HepG2 (cell line): ENCODE measurements at regions of chr16 and their contacts with region 1.

Region 1: DNA sequence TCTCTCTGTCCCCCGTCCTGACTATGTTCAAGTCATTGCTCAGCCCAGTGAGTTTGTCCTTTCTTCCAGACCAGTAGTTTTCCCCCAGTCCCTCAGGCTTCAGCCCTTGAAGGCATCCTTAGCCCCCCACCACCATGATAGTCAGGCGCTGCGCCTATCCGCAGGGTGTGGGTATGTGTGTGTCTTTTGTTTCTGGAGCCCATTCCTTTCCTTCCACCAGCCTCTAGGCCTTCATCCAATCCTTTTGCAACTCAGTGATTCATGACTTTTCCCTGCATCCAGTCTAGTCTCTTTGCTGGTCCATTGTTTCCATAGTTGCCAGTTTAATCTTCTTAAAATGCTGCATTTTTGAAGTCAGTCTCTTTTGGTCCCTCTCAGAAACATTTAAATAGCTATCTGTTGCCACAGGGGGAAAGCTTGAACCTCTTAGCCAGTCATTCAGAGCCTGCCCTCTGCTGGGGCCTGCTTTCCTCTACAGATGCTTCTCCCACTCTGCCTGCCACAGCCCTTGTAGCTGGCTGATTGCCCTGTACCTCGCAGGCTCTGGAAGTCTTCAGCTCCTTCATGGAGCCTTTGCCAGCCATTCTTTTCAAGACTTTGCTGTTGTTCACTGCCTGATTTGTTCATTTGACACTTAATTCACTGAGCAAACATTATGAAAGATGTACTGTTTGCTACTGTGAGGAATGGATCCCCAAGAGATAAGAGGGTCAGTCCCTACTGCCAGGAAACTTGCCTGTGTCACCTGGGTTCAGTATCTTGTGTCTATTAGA is 55.9 kb upstream of the ADCY7 start:
- DNase-seq: peak; percentile 77
- ATAC-seq: peak; percentile 98
- H3K4me3 ChIP-seq: no peak overlapping the region
- H3K27ac ChIP-seq: no peak overlapping the region
- H3K4me1 ChIP-seq: peaks cover 40% of the 10 kb centered on the region
- H3K27me3 ChIP-seq: no peaks in the 10 kb centered on the region
- CTCF ChIP-seq: peak; percentile 94
- EP300 ChIP-seq: no peak
- POLR2A ChIP-seq: no peak
- RAD21 ChIP-seq: peak; percentile 92

Region 2: DNA sequence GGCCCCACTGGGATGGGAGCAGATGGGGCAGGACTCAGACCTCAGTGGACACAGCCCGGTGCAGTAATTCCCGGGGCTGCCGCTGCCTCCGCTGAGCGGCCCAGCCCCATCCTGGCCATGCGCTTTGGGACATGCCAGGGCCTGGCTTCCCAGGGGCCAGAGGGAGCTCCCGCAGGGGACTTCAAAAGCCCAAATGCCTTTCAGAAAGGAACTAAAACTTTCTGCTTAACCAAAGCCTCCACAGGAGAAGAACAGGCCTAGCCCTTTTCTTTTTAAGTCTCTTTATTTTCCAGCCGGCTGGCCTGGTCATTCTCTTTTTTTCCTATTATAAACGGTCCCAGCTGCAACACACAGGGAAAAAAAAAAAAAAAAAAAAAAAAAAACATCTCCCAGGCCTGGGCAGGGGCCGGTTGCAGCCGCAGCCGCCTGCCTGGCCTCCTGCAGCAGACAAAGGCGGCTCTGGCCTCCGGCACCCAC is 343.8 kb before region 1 on chr16:
- CTCF ChIA-PET with region 1: no interaction called
- POLR2A ChIA-PET with region 1: no interaction called
- in situ Hi-C with region 1: no loop called
- intact Hi-C with region 1: no loop called
- DNase-seq: no peak
- ATAC-seq: peak; percentile 64
- H3K4me3 ChIP-seq: no peak overlapping the region
- H3K27ac ChIP-seq: no peak overlapping the region
- H3K4me1 ChIP-seq: no peaks in the 10 kb centered on the region
- H3K27me3 ChIP-seq: peaks cover 12 to 52% of the 10 kb centered on the region in 2 experiments
- CTCF ChIP-seq: no peak
- EP300 ChIP-seq: no peak
- POLR2A ChIP-seq: no peak
- RAD21 ChIP-seq: no peak

Region 3: DNA sequence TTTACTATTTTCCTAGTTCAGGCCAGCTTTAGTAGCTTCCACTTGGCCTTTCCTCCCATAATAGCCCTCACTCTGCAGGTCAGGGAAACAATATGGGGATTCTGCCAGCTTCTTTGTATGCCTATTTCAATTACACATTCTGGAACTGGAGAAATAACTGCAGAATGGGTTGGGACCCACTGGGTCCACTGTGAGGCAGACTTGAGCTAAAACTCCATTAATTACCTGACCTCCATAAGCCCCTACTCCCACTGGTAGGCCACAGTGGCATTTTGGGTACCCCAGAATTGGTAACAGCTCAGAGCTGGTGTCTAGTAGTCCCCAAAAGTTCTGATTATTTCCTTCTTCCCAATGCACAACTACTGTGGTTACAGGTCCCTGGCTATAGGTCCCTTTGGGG is 74.1 kb before region 1 on chr16:
- CTCF ChIA-PET with region 1: interaction called, 12 read pairs
- POLR2A ChIA-PET with region 1: no interaction called
- in situ Hi-C with region 1: no loop called
- intact Hi-C with region 1: loop called (anchors 5 kb)
- DNase-seq: no peak
- ATAC-seq: peak; percentile 41; the same call in 2 of the 3 replicates
- H3K4me3 ChIP-seq: no peak overlapping the region
- H3K27ac ChIP-seq: no peak overlapping the region
- H3K4me1 ChIP-seq: peaks cover 4% of the 10 kb centered on the region; the same call in 1 of the 2 replicates
- H3K27me3 ChIP-seq: peaks cover 1 to 10% of the 10 kb centered on the region in 2 experiments; a peak in 3 of 5 replicates
- CTCF ChIP-seq: peak; percentile 36
- EP300 ChIP-seq: no peak
- POLR2A ChIP-seq: no peak
- RAD21 ChIP-seq: no peak

Region 4: DNA sequence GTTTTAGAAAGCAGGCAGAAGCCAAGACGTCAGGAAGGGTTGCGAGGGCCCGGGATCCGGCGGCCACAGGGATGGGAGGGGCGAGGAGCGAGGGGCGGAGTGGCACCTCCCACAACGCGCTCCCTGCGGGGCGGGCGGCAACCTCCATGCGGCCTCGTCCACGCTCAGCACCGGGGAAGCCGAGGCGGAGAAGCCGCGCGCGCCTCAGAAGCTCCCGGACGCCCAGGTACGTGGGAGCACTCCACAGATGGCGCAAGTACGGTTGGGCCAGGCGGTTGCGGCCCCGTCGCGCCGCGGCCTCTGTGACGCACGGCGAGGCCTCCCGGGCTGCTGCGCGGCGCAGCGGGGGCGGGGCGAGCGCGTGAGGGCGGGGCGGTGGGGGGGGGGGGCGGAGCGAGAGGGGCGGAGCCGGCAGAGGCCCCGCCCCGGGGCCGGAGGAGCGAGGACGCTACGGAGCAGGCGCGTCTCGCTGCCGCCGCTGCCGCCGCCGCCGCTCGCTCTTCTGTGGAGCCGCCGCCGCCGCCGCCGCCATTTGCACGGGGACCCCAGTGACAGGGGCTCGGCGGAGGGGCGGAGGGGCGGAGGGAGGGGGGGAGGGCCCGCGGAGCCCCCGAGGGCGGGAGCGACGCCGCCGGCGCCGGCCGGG is 57.5 kb before region 1 on chr16 and contains the start of gene TENT4B:
- CTCF ChIA-PET with region 1: no interaction called
- POLR2A ChIA-PET with region 1: interaction called, 6 read pairs
- in situ Hi-C with region 1: loop called (anchors 10 kb)
- intact Hi-C with region 1: loop called (anchors 1 kb)
- DNase-seq: peak; percentile 62
- ATAC-seq: peak; percentile 68
- H3K4me3 ChIP-seq: peak within 1 kb of the TSS; percentile 98 to 100 (median 98)
- H3K27ac ChIP-seq: peak within 1 kb of the TSS; percentile 96
- H3K4me1 ChIP-seq: peaks cover 44% of the 10 kb centered on the region
- H3K27me3 ChIP-seq: no peaks in the 10 kb centered on the region; a peak in 1 of 5 replicates
- CTCF ChIP-seq: 0 out of 2 replicates have a peak, but pooled peaks have one; percentile 34
- EP300 ChIP-seq: no peak
- POLR2A ChIP-seq: peak; percentile 90 to 91
- RAD21 ChIP-seq: peak; percentile 57
- total RNA-seq, gene TENT4B: 32.8 and 36.0 TPM in 2 replicates

Region 5: DNA sequence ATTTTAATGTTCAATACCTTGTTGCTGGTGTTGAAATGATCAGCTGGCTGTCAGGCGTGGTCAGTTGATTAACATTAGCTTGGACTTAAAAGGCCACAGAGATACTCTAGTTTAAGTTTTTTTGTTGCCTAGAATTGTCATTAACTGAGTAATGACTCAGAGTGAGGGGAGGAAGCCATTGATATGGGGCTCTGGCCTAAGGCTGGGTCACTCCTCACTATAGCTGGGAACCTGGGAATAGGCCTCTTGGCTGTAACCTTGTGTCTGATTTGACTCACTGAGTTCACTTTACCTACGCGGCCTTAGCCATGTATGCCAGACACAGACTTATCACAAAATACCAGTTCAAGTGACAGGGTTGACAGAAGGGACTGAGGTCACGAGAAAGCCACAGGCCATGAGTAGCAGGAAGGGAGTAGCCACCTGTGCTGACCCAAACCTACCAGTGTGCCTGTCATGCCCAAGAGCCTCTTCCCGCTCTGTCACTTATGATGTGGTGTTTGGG is 18.0 kb after region 1 on chr16:
- CTCF ChIA-PET with region 1: no interaction called
- POLR2A ChIA-PET with region 1: no interaction called
- in situ Hi-C with region 1: no loop called
- intact Hi-C with region 1: no loop called
- DNase-seq: no peak
- ATAC-seq: peak; percentile 38; the same call in 2 of the 3 replicates
- H3K4me3 ChIP-seq: no peak overlapping the region
- H3K27ac ChIP-seq: no peak overlapping the region
- H3K4me1 ChIP-seq: no peaks in the 10 kb centered on the region
- H3K27me3 ChIP-seq: no peaks in the 10 kb centered on the region
- CTCF ChIP-seq: no peak
- EP300 ChIP-seq: no peak
- POLR2A ChIP-seq: no peak
- RAD21 ChIP-seq: no peak

Region 6: DNA sequence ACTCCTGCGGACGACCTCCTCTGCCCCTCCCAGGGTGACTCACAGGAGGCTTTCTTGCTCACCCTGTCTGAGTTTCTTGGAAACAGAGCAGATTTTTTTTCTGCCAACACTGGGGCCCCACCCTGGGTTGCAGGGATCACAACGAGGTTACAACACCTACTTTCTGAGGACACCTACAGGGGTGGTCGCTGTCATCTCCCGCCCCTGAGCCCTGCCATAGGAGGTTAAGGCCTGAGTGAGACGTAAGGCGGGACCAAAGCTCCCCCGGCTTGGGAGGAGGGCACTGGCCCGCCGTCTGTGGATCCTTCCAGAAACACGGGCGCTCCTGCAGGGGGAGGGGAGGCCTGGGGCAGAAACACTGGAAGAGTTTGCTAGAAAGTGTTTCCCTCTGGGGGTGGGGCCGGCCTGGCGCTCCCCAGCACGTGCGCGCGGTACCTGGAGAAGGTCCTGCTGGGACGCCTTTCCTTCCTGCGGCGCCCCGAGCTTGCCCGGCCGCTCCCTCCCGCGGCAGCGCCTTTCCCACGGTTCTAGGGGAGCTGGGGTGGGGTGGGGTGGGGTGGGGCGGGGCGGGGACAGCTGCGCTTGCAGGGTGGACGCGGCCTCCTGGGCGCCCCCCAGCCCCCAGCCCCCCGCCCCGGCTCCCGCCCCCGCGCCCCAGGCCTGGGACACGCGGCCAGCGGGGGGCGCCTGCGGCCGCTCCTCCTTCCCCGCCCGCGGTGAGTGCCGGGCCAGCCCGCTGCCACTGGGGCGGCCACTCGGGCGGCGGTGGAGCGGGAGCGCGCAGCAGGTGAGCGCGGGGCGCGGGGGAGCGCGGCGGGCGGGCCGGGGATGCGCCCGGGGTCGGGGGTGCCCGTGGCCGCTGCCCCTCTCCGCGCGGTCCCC is 35.2 kb after region 1 on chr16:
- CTCF ChIA-PET with region 1: no interaction called
- POLR2A ChIA-PET with region 1: no interaction called
- in situ Hi-C with region 1: no loop called
- intact Hi-C with region 1: no loop called
- DNase-seq: peak; percentile 16
- ATAC-seq: peak; percentile 67
- H3K4me3 ChIP-seq: peak overlapping the region; percentile 79 to 85 (median 81)
- H3K27ac ChIP-seq: no peak overlapping the region
- H3K4me1 ChIP-seq: peaks cover 25% of the 10 kb centered on the region
- H3K27me3 ChIP-seq: peaks cover 0 to 29% of the 10 kb centered on the region in 2 experiments; a peak in 4 of 5 replicates
- CTCF ChIP-seq: peak; percentile 37; the same call in 1 of the 2 replicates
- EP300 ChIP-seq: no peak
- POLR2A ChIP-seq: no peak
- RAD21 ChIP-seq: peak; percentile 36; the same call in 1 of the 2 replicates

Region 7: GRCh38 chr16:50259334-50260205 is 49.1 kb after region 1 on chr16:
- CTCF ChIA-PET with region 1: no interaction called
- POLR2A ChIA-PET with region 1: no interaction called
- in situ Hi-C with region 1: no loop called
- intact Hi-C with region 1: no loop called
- DNase-seq: no peak
- ATAC-seq: peak; percentile 32
- H3K4me3 ChIP-seq: peak overlapping the region in 2 of 3 experiments; percentile 20 to 24; a peak in 2 of 6 replicates
- H3K27ac ChIP-seq: no peak overlapping the region
- H3K4me1 ChIP-seq: peaks cover 56% of the 10 kb centered on the region
- H3K27me3 ChIP-seq: peaks cover 6 to 37% of the 10 kb centered on the region in 2 experiments; a peak in 4 of 5 replicates
- CTCF ChIP-seq: no peak
- EP300 ChIP-seq: no peak
- POLR2A ChIP-seq: no peak
- RAD21 ChIP-seq: no peak